CD4-positive, alpha-beta memory T cell (primary cell): ENCODE measurements at regions of chr13 and their contacts with region 1.

Region 1: GRCh38 chr13:49443704-49444523 is at the starts of genes CAB39L and SETDB2:
- DNase-seq: peak; percentile 99 to 100 (median 100)
- H3K4me3 ChIP-seq: peak within 1 kb of the TSS; percentile 72 to 88
- H3K4me3 Mint-ChIP-seq: peak within 1 kb of the TSS; percentile 92 to 98 (median 96)
- H3K27ac ChIP-seq: peak within 1 kb of the TSS; percentile 79
- H3K27ac Mint-ChIP-seq: peak within 1 kb of the TSS; percentile 93 to 99 (median 99)
- H3K4me1 ChIP-seq: peaks cover 50% of the 10 kb centered on the region
- H3K4me1 Mint-ChIP-seq: peaks cover 28 to 58% (median 41%) of the 10 kb centered on the region in 4 donors
- H3K27me3 ChIP-seq: no peaks in the 10 kb centered on the region
- H3K27me3 Mint-ChIP-seq: no peaks in the 10 kb centered on the region
- total RNA-seq, gene CAB39L: 5.7 to 7.7 TPM
- total RNA-seq, gene SETDB2: 27.6 to 28.2 TPM

Region 2: DNA sequence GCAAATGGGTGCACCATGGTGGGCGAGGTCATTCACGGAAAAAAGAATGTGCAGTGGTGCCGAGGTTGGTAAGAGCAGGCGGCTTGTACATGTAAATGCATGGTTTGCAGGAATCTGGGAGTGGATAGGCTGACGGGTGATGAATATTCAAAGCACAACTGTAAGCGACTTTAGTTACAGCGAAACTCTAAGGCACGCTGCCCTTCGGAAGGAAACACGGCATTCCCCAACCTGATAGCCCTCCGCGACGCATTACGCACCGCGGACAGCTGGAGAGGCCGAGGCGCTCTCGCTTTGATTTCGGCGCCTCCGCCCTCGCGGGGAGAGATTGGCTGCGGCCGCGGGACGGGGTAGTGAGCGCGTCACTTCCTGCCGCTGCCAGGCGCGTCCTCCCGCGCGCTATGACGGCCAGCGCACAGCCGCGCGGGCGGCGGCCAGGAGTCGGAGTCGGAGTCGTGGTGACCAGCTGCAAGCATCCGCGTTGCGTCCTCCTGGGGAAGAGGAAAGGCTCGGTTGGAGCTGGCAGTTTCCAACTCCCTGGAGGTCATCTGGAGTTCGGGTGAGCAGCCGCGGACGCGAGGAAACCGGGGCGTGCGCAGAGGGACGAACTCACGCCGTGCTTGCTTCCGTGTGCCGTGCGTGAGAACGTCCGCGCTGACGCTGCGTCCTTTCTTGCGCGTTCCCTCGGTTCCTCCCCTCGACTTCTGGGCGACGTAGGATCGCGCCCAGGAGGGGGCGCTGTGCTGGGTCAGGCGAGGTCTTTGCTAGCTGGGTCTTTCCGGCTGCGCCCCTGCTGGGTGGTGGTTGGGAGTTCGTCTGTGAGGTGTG is 1406.4 kb before region 1 on chr13 and contains the start of gene NUDT15:
- CTCF ChIA-PET with region 1: no interaction called
- POLR2A ChIA-PET with region 1: no interaction called
- intact Hi-C with region 1: loop called (anchors 10 kb)
- DNase-seq: peak; percentile 96 to 97 (median 97)
- H3K4me3 ChIP-seq: peak within 1 kb of the TSS; percentile 83 to 87
- H3K4me3 Mint-ChIP-seq: peak within 1 kb of the TSS; percentile 87 to 96 (median 93)
- H3K27ac ChIP-seq: peak within 1 kb of the TSS; percentile 94
- H3K27ac Mint-ChIP-seq: peak within 1 kb of the TSS; percentile 95 to 99 (median 97)
- H3K4me1 ChIP-seq: peaks cover 24% of the 10 kb centered on the region
- H3K4me1 Mint-ChIP-seq: peaks cover 13 to 32% (median 27%) of the 10 kb centered on the region in 4 donors
- H3K27me3 ChIP-seq: no peaks in the 10 kb centered on the region
- H3K27me3 Mint-ChIP-seq: no peaks in the 10 kb centered on the region
- total RNA-seq, gene NUDT15: 5.6 to 6.3 TPM

Region 3: DNA sequence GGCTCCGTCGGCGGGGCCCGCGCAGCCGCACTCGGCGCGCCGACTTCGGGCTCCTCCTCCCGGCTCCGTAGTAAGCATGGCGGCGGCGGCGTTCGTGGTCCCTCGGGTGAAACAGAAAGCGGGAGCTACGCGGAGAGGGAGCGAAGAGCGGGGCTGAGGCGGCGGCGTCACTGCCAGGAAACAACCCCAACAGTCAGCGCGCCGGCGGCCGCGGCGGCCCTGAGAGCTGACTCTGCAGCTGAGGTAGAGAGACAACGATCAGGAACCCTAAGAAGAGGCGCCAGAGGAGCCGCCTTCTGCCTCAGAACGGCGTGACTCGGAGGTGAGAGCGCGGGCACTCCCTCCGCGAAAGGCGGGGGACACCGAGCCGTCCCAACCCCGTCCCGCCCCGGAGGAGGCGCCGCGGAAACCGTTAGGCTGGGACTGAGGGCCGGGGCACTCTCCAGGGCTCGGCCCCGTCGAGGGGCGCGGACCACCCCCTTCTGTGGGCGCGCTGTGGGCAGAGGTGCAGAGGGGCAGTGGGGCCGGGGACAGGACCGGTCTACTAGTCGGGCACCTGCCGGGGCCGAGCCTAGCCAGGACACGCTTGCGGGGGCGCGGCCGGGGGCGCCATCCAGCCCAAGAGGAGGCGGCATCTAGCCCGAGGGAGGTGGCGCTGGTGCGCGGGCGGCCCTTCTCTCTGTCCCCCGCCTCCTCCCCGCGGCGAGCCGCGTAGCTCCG is 467.9 kb before region 1 on chr13 and contains the start of gene FNDC3A:
- CTCF ChIA-PET with region 1: no interaction called
- POLR2A ChIA-PET with region 1: interaction called, 13 read pairs
- intact Hi-C with region 1: loop called (anchors 1 kb)
- DNase-seq: peak; percentile 88 to 92 (median 89)
- H3K4me3 ChIP-seq: peak within 1 kb of the TSS; percentile 81 to 83
- H3K4me3 Mint-ChIP-seq: peak within 1 kb of the TSS; percentile 94 to 98 (median 96)
- H3K27ac ChIP-seq: peak within 1 kb of the TSS; percentile 90
- H3K27ac Mint-ChIP-seq: peak within 1 kb of the TSS; percentile 90 to 99 (median 99)
- H3K4me1 ChIP-seq: peaks cover 51% of the 10 kb centered on the region
- H3K4me1 Mint-ChIP-seq: peaks cover 28 to 55% (median 40%) of the 10 kb centered on the region in 4 donors
- H3K27me3 ChIP-seq: no peaks in the 10 kb centered on the region
- H3K27me3 Mint-ChIP-seq: peaks cover 0 to 3% of the 10 kb centered on the region in 2 donors
- total RNA-seq, gene FNDC3A: 43.7 to 44.4 TPM

Region 4: GRCh38 chr13:49428051-49428763 is 15.7 kb before region 1 on chr13:
- CTCF ChIA-PET with region 1: interaction called, 5 read pairs
- POLR2A ChIA-PET with region 1: interaction called, 12 read pairs
- intact Hi-C with region 1: no loop called
- DNase-seq: no peak
- H3K4me3 ChIP-seq: no peak overlapping the region
- H3K4me3 Mint-ChIP-seq: no peak overlapping the region
- H3K27ac ChIP-seq: no peak overlapping the region
- H3K27ac Mint-ChIP-seq: peak overlapping the region in 1 of 7 donors; percentile 1
- H3K4me1 ChIP-seq: no peaks in the 10 kb centered on the region
- H3K4me1 Mint-ChIP-seq: no peaks in the 10 kb centered on the region
- H3K27me3 ChIP-seq: no peaks in the 10 kb centered on the region
- H3K27me3 Mint-ChIP-seq: no peaks in the 10 kb centered on the region

Region 5: DNA sequence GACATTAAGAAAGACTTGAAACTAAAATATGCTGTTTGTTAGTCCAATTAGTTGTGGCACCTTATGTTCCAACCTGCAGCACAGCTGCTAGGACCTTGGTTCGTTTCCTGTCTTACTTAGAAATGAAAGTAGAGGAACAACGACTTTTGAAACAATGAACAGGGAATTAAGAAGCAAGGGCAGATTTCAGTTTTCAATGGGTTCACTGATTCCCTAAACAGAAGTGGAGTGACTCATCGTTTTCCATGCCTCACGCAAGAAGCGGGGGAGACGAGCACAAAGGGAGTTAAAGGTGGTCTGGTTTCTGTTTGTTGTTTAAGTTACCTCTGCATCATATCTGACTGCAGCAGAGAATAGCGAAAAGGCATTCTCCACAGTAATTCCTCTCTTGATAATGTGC is 96.6 kb after region 1 on chr13:
- CTCF ChIA-PET with region 1: interaction called, 3 read pairs
- POLR2A ChIA-PET with region 1: interaction called, 15 read pairs
- intact Hi-C with region 1: no loop called
- DNase-seq: peak in 3 of 5 donors; percentile 9 to 14 (median 10)
- H3K4me3 ChIP-seq: peak overlapping the region; percentile 3 to 36
- H3K4me3 Mint-ChIP-seq: peak overlapping the region; percentile 76 to 90 (median 83)
- H3K27ac ChIP-seq: peak overlapping the region; percentile 29
- H3K27ac Mint-ChIP-seq: peak overlapping the region; percentile 39 to 95 (median 87)
- H3K4me1 ChIP-seq: peaks cover 20% of the 10 kb centered on the region
- H3K4me1 Mint-ChIP-seq: peaks cover 16 to 19% (median 18%) of the 10 kb centered on the region in 4 donors
- H3K27me3 ChIP-seq: no peaks in the 10 kb centered on the region
- H3K27me3 Mint-ChIP-seq: no peaks in the 10 kb centered on the region

Region 6: GRCh38 chr13:49936085-49936940 is 492.4 kb after region 1 on chr13 and contains the start of gene SPRYD7:
- CTCF ChIA-PET with region 1: no interaction called
- POLR2A ChIA-PET with region 1: interaction called, 5 read pairs
- intact Hi-C with region 1: loop called (anchors 2 kb)
- DNase-seq: peak; percentile 89 to 92 (median 92)
- H3K4me3 ChIP-seq: peak within 1 kb of the TSS; percentile 66 to 96
- H3K4me3 Mint-ChIP-seq: peak within 1 kb of the TSS; percentile 91 to 97 (median 95)
- H3K27ac ChIP-seq: peak within 1 kb of the TSS; percentile 63
- H3K27ac Mint-ChIP-seq: peak within 1 kb of the TSS; percentile 85 to 97 (median 94)
- H3K4me1 ChIP-seq: peaks cover 19% of the 10 kb centered on the region
- H3K4me1 Mint-ChIP-seq: peaks cover 12 to 23% (median 15%) of the 10 kb centered on the region in 4 donors
- H3K27me3 ChIP-seq: no peaks in the 10 kb centered on the region
- H3K27me3 Mint-ChIP-seq: no peaks in the 10 kb centered on the region
- total RNA-seq, gene SPRYD7: 3.3 to 5.1 TPM